GM12878 (cell line): ENCODE measurements at regions of chr19 and their contacts with region 1.

Region 1: GRCh38 chr19:45643024-45643926 is 4.1 kb upstream of the EML2 start:
- DNase-seq: peak; percentile 84
- ATAC-seq: peak; percentile 38
- H3K4me3 ChIP-seq: peak overlapping the region; percentile 53
- H3K27ac ChIP-seq: peak overlapping the region; percentile 74
- H3K4me1 ChIP-seq: peaks cover 33% of the 10 kb centered on the region
- H3K27me3 ChIP-seq: no peaks in the 10 kb centered on the region
- CTCF ChIP-seq: peak; percentile 99 to 100 (median 99)
- EP300 ChIP-seq: peak in 1 of 2 experiments; percentile 17; a peak in 2 of 4 replicates
- POLR2A ChIP-seq: 0 out of 2 replicates have a peak, but pooled peaks have one; percentile 23
- RAD21 ChIP-seq: peak; percentile 99

Region 2: DNA sequence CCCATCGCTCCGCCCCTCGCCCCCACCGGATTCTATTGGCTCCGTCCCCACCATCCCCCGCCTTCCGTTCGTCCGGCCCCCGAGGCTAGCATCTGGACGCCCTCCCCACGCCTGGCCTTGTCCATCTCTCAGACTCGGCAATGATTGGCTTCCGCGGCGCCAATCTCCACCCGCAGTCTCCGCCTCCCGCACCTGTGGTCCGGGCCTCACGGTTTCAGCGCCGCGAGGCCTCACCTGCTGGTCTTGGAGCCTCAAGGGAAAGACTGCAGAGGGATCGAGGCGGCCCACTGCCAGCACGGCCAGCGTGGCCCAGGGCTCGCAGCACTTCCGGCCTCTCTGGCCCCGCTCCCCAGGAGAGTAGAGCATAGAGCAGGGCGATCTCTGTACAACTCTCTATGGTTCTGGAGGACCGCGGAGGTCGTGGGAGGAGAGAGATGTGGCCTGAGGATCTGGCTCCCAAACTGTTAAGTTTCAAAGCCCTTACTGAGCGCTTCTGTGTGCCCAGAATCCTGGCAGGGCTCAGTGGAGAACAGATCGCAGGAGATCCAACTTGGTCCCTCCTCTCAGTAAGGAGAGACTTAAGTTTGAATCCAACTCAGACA is 219.6 kb before region 1 on chr19 and contains the start of gene ERCC1:
- CTCF ChIA-PET with region 1: interaction called, 11 read pairs
- POLR2A ChIA-PET with region 1: interaction called, 4 read pairs
- RAD21 ChIA-PET with region 1: interaction called, 3 read pairs
- SMC1A ChIA-PET with region 1: interaction called, 4 read pairs
- in situ Hi-C with region 1: no loop called
- intact Hi-C with region 1: no loop called
- DNase-seq: peak; percentile 89
- ATAC-seq: peak; percentile 83
- H3K4me3 ChIP-seq: peak within 1 kb of the TSS; percentile 82
- H3K27ac ChIP-seq: peak within 1 kb of the TSS; percentile 91
- H3K4me1 ChIP-seq: peaks cover 35% of the 10 kb centered on the region
- H3K27me3 ChIP-seq: no peaks in the 10 kb centered on the region
- CTCF ChIP-seq: no peak
- EP300 ChIP-seq: no peak
- POLR2A ChIP-seq: peak; percentile 93
- RAD21 ChIP-seq: no peak
- polyA plus RNA-seq, gene ERCC1: 14.7 to 36.8 TPM

Region 3: DNA sequence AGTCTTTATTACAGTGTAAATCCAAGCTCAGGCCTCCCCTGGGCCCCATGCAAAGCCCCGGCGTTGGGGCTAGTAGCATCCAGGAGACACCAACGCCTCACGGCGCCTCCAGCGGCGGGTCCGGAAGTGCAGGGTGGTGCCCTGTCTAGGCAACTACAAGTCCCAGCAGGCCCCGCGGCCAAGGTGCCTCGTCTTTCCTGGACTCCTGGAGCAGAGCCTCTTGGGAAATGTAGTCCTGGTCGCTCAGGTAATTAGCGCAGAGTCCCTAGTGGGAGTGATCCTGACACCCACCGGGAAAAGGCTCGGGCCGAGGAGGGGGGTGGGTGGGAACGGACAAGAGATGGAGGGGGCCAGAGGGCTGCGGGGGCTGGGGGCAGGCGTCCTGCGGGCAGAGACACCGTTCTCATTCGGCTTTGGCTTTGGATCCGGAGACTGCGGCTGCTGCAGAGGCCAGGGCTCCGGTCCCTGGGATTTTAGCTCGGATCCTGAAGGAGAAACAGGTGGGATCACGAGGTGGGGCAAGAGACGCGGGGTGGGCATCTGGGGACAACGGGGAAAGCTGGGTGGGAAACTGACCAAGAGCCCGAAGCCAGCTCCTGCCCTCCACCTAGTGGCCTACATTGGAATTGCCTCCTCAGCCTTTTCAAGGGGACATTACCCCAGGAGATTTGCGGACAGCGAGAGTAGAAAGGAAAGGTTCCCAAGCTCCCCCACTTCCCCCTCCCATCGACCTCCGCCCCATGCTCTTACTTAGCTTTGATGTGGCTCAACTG is 157.8 kb before region 1 on chr19:
- CTCF ChIA-PET with region 1: interaction called, 41 read pairs
- POLR2A ChIA-PET with region 1: interaction called, 10 read pairs
- RAD21 ChIA-PET with region 1: interaction called, 26 read pairs
- SMC1A ChIA-PET with region 1: interaction called, 11 read pairs
- in situ Hi-C with region 1: no loop called
- intact Hi-C with region 1: no loop called
- DNase-seq: peak; percentile 71
- ATAC-seq: peak; percentile 99
- H3K4me3 ChIP-seq: peak overlapping the region; percentile 74
- H3K27ac ChIP-seq: 0 out of 2 replicates have a peak overlapping the region, but pooled peaks have one; percentile 40
- H3K4me1 ChIP-seq: 0 out of 2 replicates have a peak, but pooled peaks cover 3% of the 10 kb centered on the region
- H3K27me3 ChIP-seq: no peaks in the 10 kb centered on the region
- CTCF ChIP-seq: peak; percentile 91 to 98 (median 96)
- EP300 ChIP-seq: no peak
- POLR2A ChIP-seq: no peak
- RAD21 ChIP-seq: peak; percentile 60

Region 4: DNA sequence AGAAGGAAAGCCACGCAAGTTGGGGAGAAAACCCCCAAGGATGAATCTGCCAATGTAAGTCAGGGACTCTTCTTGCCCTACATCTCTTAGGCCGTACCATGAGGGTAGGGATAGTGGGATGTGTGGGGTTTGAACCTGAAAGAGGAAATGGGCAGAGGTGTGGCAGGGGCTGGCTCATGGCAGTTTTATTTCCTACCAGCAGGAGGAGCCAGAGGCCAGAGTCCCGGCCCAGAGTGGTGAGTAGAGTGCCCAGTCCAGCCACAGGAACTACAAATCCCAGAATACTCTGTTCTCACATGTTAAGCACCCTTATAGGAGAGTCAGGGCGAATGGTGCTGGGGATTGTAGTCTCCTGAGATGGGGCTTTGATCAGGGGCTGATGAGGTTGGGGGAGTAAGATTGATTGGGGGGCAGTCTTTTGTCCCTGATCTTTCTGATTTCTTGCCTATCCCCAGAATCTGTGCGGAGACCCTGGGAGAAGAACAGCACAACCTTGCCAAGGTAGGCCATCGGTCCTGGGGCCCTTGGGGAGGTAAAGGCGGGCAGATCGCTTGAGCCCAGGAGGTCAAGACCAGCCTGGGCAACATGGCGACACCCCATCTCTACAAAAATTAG is 119.5 kb before region 1 on chr19:
- CTCF ChIA-PET with region 1: interaction called, 11 read pairs
- POLR2A ChIA-PET with region 1: interaction called, 3 read pairs
- RAD21 ChIA-PET with region 1: interaction called, 6 read pairs
- SMC1A ChIA-PET with region 1: interaction called, 3 read pairs
- in situ Hi-C with region 1: loop called (anchors 10 kb)
- intact Hi-C with region 1: loop called (anchors 1 kb)
- DNase-seq: peak; percentile 57
- ATAC-seq: peak; percentile 96
- H3K4me3 ChIP-seq: no peak overlapping the region
- H3K27ac ChIP-seq: no peak overlapping the region
- H3K4me1 ChIP-seq: peaks cover 10% of the 10 kb centered on the region; the same call in 1 of the 2 replicates
- H3K27me3 ChIP-seq: no peaks in the 10 kb centered on the region
- CTCF ChIP-seq: peak; percentile 82 to 98 (median 90)
- EP300 ChIP-seq: no peak
- POLR2A ChIP-seq: no peak
- RAD21 ChIP-seq: peak; percentile 67

Region 5: GRCh38 chr19:45591004-45591637 is 52.2 kb before region 1 on chr19:
- CTCF ChIA-PET with region 1: interaction called, 11 read pairs
- POLR2A ChIA-PET with region 1: interaction called, 8 read pairs
- RAD21 ChIA-PET with region 1: interaction called, 5 read pairs
- SMC1A ChIA-PET with region 1: interaction called, 5 read pairs
- in situ Hi-C with region 1: no loop called
- intact Hi-C with region 1: loop called (anchors 1 kb)
- DNase-seq: no peak
- ATAC-seq: peak; percentile 93
- H3K4me3 ChIP-seq: no peak overlapping the region
- H3K27ac ChIP-seq: no peak overlapping the region
- H3K4me1 ChIP-seq: no peaks in the 10 kb centered on the region; the same call in 1 of the 2 replicates
- H3K27me3 ChIP-seq: no peaks in the 10 kb centered on the region
- CTCF ChIP-seq: peak; percentile 53 to 59 (median 59)
- EP300 ChIP-seq: no peak
- POLR2A ChIP-seq: no peak
- RAD21 ChIP-seq: peak; percentile 71

Region 6: DNA sequence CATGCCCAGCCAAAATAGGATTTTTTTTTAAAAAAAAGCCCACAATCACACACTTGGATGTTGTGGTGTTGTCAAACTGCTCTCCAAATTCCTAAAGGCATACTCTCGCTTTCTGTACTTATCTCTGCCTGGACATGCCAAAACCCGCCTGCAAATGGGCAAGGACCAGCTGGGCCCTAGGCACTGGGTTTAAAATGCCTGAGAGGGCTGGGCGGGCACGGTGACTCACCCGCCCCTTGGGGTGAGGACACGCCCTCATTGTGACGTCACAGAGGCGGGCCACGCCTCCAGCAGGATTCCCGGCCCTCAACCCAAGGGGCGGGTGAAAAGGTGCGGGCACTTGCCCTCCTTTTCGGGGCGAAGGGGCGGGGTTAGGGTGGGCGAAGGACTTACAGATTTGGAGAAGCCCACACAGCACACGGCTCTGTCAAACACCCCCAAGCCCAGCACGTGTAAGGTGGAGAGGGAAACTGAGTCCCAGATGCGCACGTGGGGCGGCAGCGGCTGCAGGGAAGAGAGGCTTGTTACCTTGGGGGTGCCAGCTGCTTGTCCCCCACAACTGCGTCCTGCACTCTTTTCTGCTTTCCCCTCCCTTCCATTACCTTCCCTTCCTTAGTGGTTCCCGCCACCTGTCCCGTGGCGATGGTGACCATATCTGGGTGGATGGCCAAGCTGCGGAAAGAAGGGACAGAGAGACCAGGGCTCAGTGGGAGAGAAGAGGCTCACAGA is 10.6 kb before region 1 on chr19:
- CTCF ChIA-PET with region 1: interaction called, 35 read pairs
- POLR2A ChIA-PET with region 1: interaction called, 13 read pairs
- RAD21 ChIA-PET with region 1: interaction called, 21 read pairs
- SMC1A ChIA-PET with region 1: interaction called, 24 read pairs
- in situ Hi-C with region 1: no loop called
- intact Hi-C with region 1: loop called (anchors 1 kb)
- DNase-seq: no peak
- ATAC-seq: peak; percentile 67
- H3K4me3 ChIP-seq: no peak overlapping the region
- H3K27ac ChIP-seq: no peak overlapping the region
- H3K4me1 ChIP-seq: peaks cover 8% of the 10 kb centered on the region
- H3K27me3 ChIP-seq: no peaks in the 10 kb centered on the region
- CTCF ChIP-seq: no peak
- EP300 ChIP-seq: no peak
- POLR2A ChIP-seq: no peak
- RAD21 ChIP-seq: no peak

Region 7: GRCh38 chr19:45770192-45771101 is 127.2 kb after region 1 on chr19:
- CTCF ChIA-PET with region 1: interaction called, 10 read pairs
- POLR2A ChIA-PET with region 1: interaction called, 3 read pairs
- RAD21 ChIA-PET with region 1: interaction called, 7 read pairs
- SMC1A ChIA-PET with region 1: no interaction called
- in situ Hi-C with region 1: no loop called
- intact Hi-C with region 1: no loop called
- DNase-seq: peak; percentile 76
- ATAC-seq: peak; percentile 82
- H3K4me3 ChIP-seq: peak overlapping the region; percentile 78
- H3K27ac ChIP-seq: peak overlapping the region; percentile 67; the same call in 1 of the 2 replicates
- H3K4me1 ChIP-seq: peaks cover 4% of the 10 kb centered on the region
- H3K27me3 ChIP-seq: no peaks in the 10 kb centered on the region
- CTCF ChIP-seq: peak; percentile 86 to 95 (median 94)
- EP300 ChIP-seq: no peak
- POLR2A ChIP-seq: peak; percentile 65; the same call in 1 of the 2 replicates
- RAD21 ChIP-seq: peak; percentile 74